MCF 10A (cell line): ENCODE measurements at regions of chr9 and their contacts with region 1.

Region 1: GRCh38 chr9:106878924-106879323 is 16.0 kb downstream of the ZNF462 start:
- DNase-seq: peak; percentile 92
- H3K4me3 Mint-ChIP-seq: no peak overlapping the region
- H3K27ac Mint-ChIP-seq: peak overlapping the region; percentile 76
- H3K4me1 Mint-ChIP-seq: peaks cover 57% of the 10 kb centered on the region
- H3K27me3 Mint-ChIP-seq: no peaks in the 10 kb centered on the region
- CTCF ChIP-seq: no peak

Region 2: GRCh38 chr9:106892632-106893031 is 13.7 kb after region 1 on chr9:
- CTCF ChIA-PET with region 1: interaction called, 121 read pairs
- POLR2A ChIA-PET with region 1: interaction called, 171 read pairs
- intact Hi-C with region 1: no loop called
- DNase-seq: peak; percentile 97
- H3K4me3 Mint-ChIP-seq: peak overlapping the region; percentile 53
- H3K27ac Mint-ChIP-seq: peak overlapping the region; percentile 77
- H3K4me1 Mint-ChIP-seq: peaks cover 60% of the 10 kb centered on the region
- H3K27me3 Mint-ChIP-seq: no peaks in the 10 kb centered on the region
- CTCF ChIP-seq: no peak